T-cell (primary cell): ENCODE measurements at regions of chr17 and their contacts with region 1.

Region 1: GRCh38 chr17:45051060-45051719 is at the start of gene DCAKD:
- DNase-seq: peak; percentile 70 to 94 (median 81)
- ATAC-seq: peak; percentile 93 to 99 (median 96)
- H3K4me3 ChIP-seq: peak within 1 kb of the TSS; percentile 76 to 81
- H3K4me3 Mint-ChIP-seq: peak within 1 kb of the TSS; percentile 86 to 92 (median 87)
- H3K27ac ChIP-seq: peak within 1 kb of the TSS; percentile 85
- H3K27ac Mint-ChIP-seq: peak within 1 kb of the TSS; percentile 98
- H3K4me1 ChIP-seq: peaks cover 12 to 42% of the 10 kb centered on the region in 2 experiments
- H3K4me1 Mint-ChIP-seq: peaks cover 31 to 45% (median 43%) of the 10 kb centered on the region in 3 donors
- H3K27me3 ChIP-seq: no peaks in the 10 kb centered on the region
- H3K27me3 Mint-ChIP-seq: no peaks in the 10 kb centered on the region
- total RNA-seq, gene DCAKD: 18.7 to 40.7 (median 29.7) TPM

Region 2: GRCh38 chr17:44708401-44709181 is 342.6 kb before region 1 on chr17 and contains the start of gene DBF4B:
- CTCF ChIA-PET with region 1: no interaction called
- POLR2A ChIA-PET with region 1: interaction called in 1 of 2 experiments, 10 read pairs
- DNase-seq: peak; percentile 61 to 94 (median 79)
- ATAC-seq: peak; percentile 93 to 97 (median 96)
- H3K4me3 ChIP-seq: peak within 1 kb of the TSS; percentile 77 to 100
- H3K4me3 Mint-ChIP-seq: no peak within 1 kb of the TSS
- H3K27ac ChIP-seq: no peak within 1 kb of the TSS
- H3K27ac Mint-ChIP-seq: no peak within 1 kb of the TSS
- H3K4me1 ChIP-seq: peaks cover 15 to 16% of the 10 kb centered on the region in 2 experiments
- H3K4me1 Mint-ChIP-seq: peaks cover 0 to 6% (median 5%) of the 10 kb centered on the region in 3 donors
- H3K27me3 ChIP-seq: peaks cover 0 to 3% of the 10 kb centered on the region in 2 experiments
- H3K27me3 Mint-ChIP-seq: peaks cover 0 to 8% of the 10 kb centered on the region in 2 donors
- total RNA-seq, gene DBF4B: 3.8 to 7.8 (median 6.8) TPM

Region 3: DNA sequence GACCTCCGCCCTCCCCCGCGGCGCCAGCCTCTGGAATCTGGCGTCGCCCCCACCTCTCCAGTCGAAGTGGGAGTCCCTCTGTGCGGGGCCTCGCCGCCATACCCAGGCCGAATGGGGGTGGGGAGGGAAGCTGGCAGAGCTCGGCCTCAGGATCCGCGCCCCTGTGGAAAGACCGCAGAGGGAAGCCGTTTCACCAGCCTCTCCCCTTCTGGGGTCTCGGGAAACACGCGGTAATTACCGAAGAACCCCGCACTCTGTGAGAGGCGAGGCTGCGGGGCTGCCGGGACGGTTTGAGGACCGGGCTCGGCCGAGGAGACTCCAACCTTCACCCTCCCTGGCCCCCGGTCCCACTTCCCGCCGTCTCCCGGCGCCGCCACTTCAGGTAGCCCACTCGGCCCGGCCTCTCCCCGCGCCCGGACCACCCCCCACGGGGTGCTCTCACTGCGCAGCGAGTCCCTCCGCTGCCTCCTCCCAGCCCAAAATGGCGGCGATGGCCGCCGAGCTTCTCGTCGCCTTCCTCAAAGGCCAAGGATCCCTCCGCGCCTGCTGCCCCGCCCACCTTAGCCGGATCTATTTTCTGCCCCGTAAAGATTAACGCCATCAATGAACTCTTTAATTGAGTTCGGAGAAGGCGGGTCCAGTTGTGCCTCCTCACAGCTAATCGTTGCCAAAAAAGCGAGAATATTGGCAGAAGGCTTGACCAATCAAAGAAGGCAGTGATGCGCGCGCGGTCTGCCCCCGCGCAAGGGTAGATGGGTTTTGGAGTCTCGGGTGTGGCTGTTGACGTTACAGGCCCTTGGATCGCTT is 110.0 kb after region 1 on chr17:
- CTCF ChIA-PET with region 1: no interaction called
- POLR2A ChIA-PET with region 1: no interaction called
- DNase-seq: peak; percentile 92 to 99 (median 98)
- ATAC-seq: peak; percentile 94 to 95 (median 94)
- H3K4me3 ChIP-seq: peak overlapping the region; percentile 90 to 94
- H3K4me3 Mint-ChIP-seq: peak overlapping the region; percentile 95 to 99 (median 96)
- H3K27ac ChIP-seq: peak overlapping the region; percentile 100
- H3K27ac Mint-ChIP-seq: peak overlapping the region; percentile 99
- H3K4me1 ChIP-seq: peaks cover 16 to 32% of the 10 kb centered on the region in 2 experiments
- H3K4me1 Mint-ChIP-seq: peaks cover 37 to 46% (median 44%) of the 10 kb centered on the region in 3 donors
- H3K27me3 ChIP-seq: no peaks in the 10 kb centered on the region
- H3K27me3 Mint-ChIP-seq: no peaks in the 10 kb centered on the region

Region 4: GRCh38 chr17:45197555-45198334 is 146.6 kb after region 1 on chr17:
- CTCF ChIA-PET with region 1: interaction called in 1 of 2 experiments, 10 read pairs
- POLR2A ChIA-PET with region 1: no interaction called
- DNase-seq: peak; percentile 56 to 92 (median 81)
- ATAC-seq: peak; percentile 98 to 99 (median 99)
- H3K4me3 ChIP-seq: no peak overlapping the region
- H3K4me3 Mint-ChIP-seq: no peak overlapping the region
- H3K27ac ChIP-seq: no peak overlapping the region
- H3K27ac Mint-ChIP-seq: no peak overlapping the region
- H3K4me1 ChIP-seq: peaks cover 0 to 7% of the 10 kb centered on the region in 2 experiments
- H3K4me1 Mint-ChIP-seq: peaks cover 0 to 5% (median 4%) of the 10 kb centered on the region in 3 donors
- H3K27me3 ChIP-seq: no peaks in the 10 kb centered on the region
- H3K27me3 Mint-ChIP-seq: no peaks in the 10 kb centered on the region